Common myeloid progenitor, CD34-positive (primary cell): ENCODE measurements at regions of chr3 and their contacts with region 1.

Region 1: GRCh38 chr3:14388201-14388600 is 14.2 kb upstream of the SLC6A6 start:
- DNase-seq: no peak
- H3K4me3 ChIP-seq: no peak overlapping the region
- H3K27ac ChIP-seq: no peak overlapping the region
- H3K4me1 ChIP-seq: peaks cover 0 to 14% (median under 1%) of the 10 kb centered on the region in 4 experiments
- H3K27me3 ChIP-seq: no peaks in the 10 kb centered on the region

Region 2: GRCh38 chr3:14340960-14341708 is 47.1 kb before region 1 on chr3:
- CTCF ChIA-PET with region 1: no interaction called
- POLR2A ChIA-PET with region 1: no interaction called
- DNase-seq: no peak
- H3K4me3 ChIP-seq: no peak overlapping the region
- H3K27ac ChIP-seq: no peak overlapping the region
- H3K4me1 ChIP-seq: peaks cover 0 to 11% (median 7%) of the 10 kb centered on the region in 4 experiments
- H3K27me3 ChIP-seq: peaks cover 0 to 2% (median 0%) of the 10 kb centered on the region in 5 experiments

Region 3: DNA sequence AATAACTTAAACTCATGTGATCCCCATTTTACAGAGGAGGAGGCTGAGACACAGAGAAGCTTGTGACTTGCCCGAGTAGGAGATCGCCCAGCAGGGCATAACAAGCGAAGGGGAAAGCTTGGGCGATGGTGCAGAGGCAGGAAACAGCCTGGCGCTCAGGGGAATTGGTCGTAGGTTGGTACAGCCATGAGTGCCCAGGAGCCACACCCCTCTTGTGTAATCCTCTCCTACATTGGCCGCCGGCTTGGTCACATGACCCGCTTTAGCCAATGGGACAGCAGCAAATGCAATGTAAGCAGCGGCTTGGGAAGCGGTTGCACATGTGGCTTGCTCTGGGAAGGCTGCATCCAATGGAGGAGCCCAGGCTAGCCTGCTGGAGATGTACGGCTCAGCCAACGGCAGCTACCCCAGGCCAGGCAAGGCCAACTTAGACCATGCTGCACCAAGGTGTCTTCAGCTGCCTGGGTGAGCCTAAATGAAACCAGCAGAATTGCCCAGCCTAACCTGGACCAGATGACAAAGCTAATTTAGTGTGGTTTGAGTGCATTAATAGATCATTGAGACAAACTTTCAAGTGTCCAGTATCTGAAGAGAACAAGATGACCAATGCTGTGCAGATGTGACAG is 36.1 kb before region 1 on chr3:
- CTCF ChIA-PET with region 1: no interaction called
- POLR2A ChIA-PET with region 1: no interaction called
- DNase-seq: peak in 2 of 3 donors; percentile 17 to 19
- H3K4me3 ChIP-seq: no peak overlapping the region
- H3K27ac ChIP-seq: no peak overlapping the region
- H3K4me1 ChIP-seq: no peaks in the 10 kb centered on the region
- H3K27me3 ChIP-seq: peaks cover 0 to 4% (median 0%) of the 10 kb centered on the region in 5 experiments

Region 4: GRCh38 chr3:14374444-14374883 is 13.7 kb before region 1 on chr3:
- CTCF ChIA-PET with region 1: interaction called, 12 read pairs
- POLR2A ChIA-PET with region 1: no interaction called
- DNase-seq: no peak
- H3K4me3 ChIP-seq: no peak overlapping the region
- H3K27ac ChIP-seq: no peak overlapping the region
- H3K4me1 ChIP-seq: peaks cover 4 to 37% (median 27%) of the 10 kb centered on the region in 4 experiments
- H3K27me3 ChIP-seq: no peaks in the 10 kb centered on the region

Region 5: GRCh38 chr3:14460342-14461005 is 72.3 kb after region 1 on chr3:
- CTCF ChIA-PET with region 1: no interaction called
- POLR2A ChIA-PET with region 1: no interaction called
- DNase-seq: no peak
- H3K4me3 ChIP-seq: no peak overlapping the region
- H3K27ac ChIP-seq: no peak overlapping the region
- H3K4me1 ChIP-seq: no peaks in the 10 kb centered on the region
- H3K27me3 ChIP-seq: no peaks in the 10 kb centered on the region

Region 6: DNA sequence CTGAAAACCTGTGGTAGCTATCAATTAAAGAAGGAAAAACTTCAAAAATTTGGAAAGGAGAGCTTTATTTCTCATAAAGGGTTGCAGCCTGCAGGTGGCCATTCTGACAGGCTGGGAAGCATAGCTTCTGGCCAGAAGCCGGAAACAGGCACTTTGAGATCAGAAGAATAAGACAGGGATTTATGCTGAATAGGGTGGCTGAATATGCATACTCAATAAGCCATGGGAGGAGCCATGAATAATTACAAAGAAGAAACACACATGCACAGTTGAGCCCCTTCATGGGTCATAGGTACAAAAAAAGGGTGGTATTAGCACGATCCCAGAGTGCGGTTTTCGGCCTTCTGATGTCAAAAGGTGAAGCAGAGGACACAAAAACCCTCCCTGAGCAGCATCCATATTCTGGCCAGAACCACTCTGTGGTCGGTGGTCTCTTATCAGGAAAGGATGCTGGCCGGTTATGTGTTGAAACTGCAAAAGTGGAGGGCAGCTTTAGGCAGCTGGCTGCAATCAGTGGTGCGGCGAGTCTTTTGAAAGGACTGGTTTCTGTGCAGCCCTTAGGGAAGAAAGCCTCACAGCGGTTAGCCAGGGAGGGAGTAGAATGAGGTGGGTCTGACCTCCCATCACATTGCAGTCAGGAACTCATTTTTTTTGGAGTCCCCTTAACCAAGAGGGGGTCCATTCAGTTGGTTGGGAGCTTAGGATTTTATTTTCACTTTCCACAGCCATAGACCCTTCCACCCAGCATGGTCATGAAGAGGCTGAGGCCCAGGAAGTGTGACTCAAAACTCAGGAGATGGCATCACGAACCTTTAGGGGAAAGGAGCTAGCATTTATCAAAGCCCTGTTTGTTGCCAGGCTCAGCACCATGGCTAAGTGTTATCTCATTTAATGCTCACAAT is 228.7 kb after region 1 on chr3:
- CTCF ChIA-PET with region 1: no interaction called
- POLR2A ChIA-PET with region 1: no interaction called
- DNase-seq: peak in 1 of 3 donors; percentile 22
- H3K4me3 ChIP-seq: no peak overlapping the region
- H3K27ac ChIP-seq: no peak overlapping the region
- H3K4me1 ChIP-seq: no peaks in the 10 kb centered on the region
- H3K27me3 ChIP-seq: peaks cover 11 to 70% (median 23%) of the 10 kb centered on the region in 5 experiments